Activated CD4-positive, alpha-beta T cell treated with anti-CD3 and anti-CD28 coated beads for 36 hours (primary cell): ENCODE measurements at regions of chr3 and their contacts with region 1.

Region 1: DNA sequence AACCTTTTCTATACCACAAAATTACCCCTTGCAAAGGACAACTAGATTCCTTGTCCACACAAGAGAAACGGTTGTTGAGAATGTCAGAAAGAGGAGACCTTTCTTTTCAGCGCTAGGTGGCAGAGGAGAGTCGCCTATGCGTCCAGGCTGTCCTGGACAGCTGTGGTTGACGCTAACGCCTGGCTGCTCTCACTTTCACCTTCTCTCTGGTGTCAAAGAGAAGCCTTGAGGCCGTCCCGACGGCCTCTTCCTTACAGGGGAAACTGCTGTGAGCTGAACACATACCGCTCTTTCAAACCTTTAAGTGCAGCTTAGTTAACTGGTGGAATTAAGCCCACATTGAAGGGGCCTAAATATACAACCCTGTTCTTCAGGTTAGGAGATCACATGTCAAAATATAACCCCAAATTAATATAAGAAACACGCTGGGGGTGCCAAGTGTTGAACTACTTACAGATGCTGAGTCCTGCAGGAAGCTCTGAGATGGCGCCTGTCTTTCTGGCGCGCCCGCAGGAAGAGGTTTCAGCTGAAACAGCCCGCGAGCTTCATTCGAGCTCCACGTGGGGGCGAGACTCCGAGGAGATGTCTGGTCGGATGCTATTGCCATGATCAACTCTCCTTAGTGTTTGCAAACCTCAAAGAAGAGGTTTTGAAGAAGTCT is 26.1 kb upstream of the KBTBD8 start:
- DNase-seq: peak; percentile 80
- ATAC-seq: peak; percentile 96
- H3K4me3 Mint-ChIP-seq: peak overlapping the region; percentile 69
- H3K27ac Mint-ChIP-seq: peak overlapping the region; percentile 73
- H3K4me1 Mint-ChIP-seq: peaks cover 13% of the 10 kb centered on the region
- H3K27me3 Mint-ChIP-seq: peaks cover 2% of the 10 kb centered on the region

Region 2: DNA sequence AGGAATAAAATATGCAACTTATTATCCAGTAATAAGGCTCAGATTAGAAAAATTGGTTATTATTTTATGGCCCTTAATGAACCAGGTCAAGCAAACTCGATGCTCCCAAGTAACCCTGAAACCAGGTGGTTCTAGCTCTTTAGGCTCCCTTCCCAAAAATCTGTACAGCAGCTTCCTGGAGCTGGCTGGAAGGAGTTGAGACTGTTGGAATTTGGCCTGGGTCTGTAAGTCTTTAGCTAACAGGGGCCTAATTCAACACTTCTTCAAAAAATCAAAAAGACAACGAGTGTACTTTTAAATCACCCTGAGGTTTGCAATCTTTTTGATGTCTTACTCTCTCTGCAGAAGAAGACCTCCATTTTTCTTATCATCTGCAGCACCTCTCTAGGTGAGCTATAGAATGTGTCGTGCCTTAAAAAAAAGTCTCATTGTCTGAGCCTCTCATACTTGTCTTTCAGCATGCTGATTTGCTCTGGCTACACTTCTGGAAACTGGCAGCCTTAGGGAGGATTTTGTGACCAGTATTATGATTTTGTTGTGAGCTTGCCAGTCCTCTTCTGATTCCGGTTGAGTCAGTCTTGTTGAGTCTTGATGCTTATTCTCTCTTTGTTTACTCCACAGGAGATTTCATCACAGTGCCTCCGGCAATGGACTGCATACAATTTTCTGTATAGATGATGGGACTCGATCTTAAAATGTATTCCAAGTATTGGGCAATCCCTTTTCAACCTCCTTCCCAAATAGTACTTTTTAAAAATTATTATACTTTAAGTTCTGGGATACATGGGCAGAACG is 208.9 kb before region 1 on chr3:
- CTCF ChIA-PET with region 1: no interaction called
- POLR2A ChIA-PET with region 1: no interaction called
- intact Hi-C with region 1: no loop called
- DNase-seq: no peak
- ATAC-seq: no peak
- H3K4me3 Mint-ChIP-seq: no peak overlapping the region
- H3K27ac Mint-ChIP-seq: no peak overlapping the region
- H3K4me1 Mint-ChIP-seq: no peaks in the 10 kb centered on the region
- H3K27me3 Mint-ChIP-seq: no peaks in the 10 kb centered on the region

Region 3: DNA sequence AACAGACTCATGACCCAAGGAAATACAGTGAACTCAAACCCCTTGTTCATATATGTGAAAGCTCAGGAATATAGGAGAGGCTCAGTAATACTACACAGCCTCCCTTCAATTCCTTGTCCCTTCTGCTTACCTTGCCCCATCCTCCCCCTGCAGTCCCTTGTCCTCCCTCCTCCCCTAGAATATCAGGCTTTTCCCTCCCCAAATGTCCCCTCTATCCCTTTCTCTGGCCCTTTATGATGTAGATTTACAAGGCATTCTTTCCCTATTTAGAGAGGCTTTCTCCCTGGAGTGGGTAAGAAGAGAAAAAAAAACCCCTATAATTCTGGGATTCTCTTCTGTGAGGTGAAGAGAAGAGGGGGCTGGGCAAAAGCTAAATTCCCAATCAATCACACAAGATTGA is 38.8 kb before region 1 on chr3:
- CTCF ChIA-PET with region 1: interaction called, 30 read pairs
- POLR2A ChIA-PET with region 1: no interaction called
- intact Hi-C with region 1: no loop called
- DNase-seq: no peak
- ATAC-seq: no peak
- H3K4me3 Mint-ChIP-seq: no peak overlapping the region
- H3K27ac Mint-ChIP-seq: no peak overlapping the region
- H3K4me1 Mint-ChIP-seq: no peaks in the 10 kb centered on the region
- H3K27me3 Mint-ChIP-seq: peaks cover 13% of the 10 kb centered on the region

Region 4: DNA sequence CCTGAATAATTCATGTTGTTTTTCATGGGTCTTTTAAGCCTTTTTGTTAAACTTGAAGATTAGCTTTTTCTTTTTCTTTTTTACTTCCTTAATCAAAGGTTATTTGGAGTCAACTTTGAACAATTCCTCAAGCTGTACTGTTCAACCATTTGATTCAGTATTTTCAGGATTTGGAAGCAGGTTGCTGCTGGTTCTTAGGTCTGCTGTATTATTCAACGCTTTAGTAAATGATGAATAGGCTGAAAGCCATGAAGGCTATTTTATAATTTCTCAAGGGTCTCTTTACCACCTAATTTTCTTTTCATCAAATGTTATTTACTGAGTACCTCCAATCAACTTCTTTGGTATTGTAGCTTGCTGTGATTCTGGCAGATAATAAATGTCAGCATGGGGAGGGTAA is 19.7 kb before region 1 on chr3:
- CTCF ChIA-PET with region 1: interaction called, 13 read pairs
- POLR2A ChIA-PET with region 1: no interaction called
- intact Hi-C with region 1: no loop called
- DNase-seq: no peak
- ATAC-seq: no peak
- H3K4me3 Mint-ChIP-seq: no peak overlapping the region
- H3K27ac Mint-ChIP-seq: no peak overlapping the region
- H3K4me1 Mint-ChIP-seq: no peaks in the 10 kb centered on the region
- H3K27me3 Mint-ChIP-seq: peaks cover 4% of the 10 kb centered on the region

Region 5: DNA sequence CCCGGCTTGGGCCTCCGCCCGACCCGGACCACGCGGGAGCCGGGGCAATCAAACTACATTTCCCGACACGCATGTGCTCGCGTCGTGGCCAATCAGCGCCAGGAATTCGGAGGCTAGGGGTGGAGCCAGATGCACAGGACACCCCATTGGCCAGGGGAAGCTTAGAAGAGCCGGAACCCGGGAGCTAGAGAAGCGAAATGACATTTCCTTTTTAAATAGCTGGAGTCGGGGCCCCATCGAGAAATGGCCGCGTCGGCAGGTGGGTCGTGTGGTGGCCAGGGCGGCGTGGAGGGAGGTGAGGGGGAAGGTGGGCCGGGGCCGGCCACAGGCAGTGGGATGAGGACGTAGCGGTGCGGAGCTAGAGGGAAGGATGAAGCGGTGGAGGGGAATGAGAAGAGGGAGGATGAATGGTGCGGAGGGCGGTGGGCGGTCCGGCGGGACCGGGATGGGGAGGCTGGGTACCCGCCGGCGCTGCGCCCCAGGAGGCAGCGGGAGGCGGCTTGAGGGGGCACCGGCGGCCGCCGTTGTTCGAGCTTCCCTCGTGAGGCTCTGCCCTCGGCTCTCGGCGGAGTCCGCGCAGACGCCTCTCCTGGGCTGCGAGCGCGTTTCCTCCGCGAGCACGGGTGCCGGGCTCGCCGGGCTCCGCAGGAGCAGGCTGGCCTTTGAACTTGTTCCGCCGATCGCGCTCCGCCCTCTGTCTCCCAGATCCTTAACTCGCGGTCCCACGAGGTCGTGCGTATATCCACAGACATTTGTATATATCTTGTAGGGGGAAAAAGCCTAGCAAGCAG is 26.3 kb after region 1 on chr3 and contains the start of gene KBTBD8:
- CTCF ChIA-PET with region 1: interaction called, 26 read pairs
- POLR2A ChIA-PET with region 1: interaction called, 7 read pairs
- intact Hi-C with region 1: loop called in 1 of 2 experiments (anchors 2 kb)
- DNase-seq: peak; percentile 98
- ATAC-seq: peak; percentile 95
- H3K4me3 Mint-ChIP-seq: peak within 1 kb of the TSS; percentile 88
- H3K27ac Mint-ChIP-seq: peak within 1 kb of the TSS; percentile 92
- H3K4me1 Mint-ChIP-seq: peaks cover 30% of the 10 kb centered on the region
- H3K27me3 Mint-ChIP-seq: peaks cover 7% of the 10 kb centered on the region
- total RNA-seq, gene KBTBD8: 8.3 to 9.2 TPM

Region 6: GRCh38 chr3:67030785-67031740 is 59.0 kb after region 1 on chr3:
- CTCF ChIA-PET with region 1: interaction called, 7 read pairs
- POLR2A ChIA-PET with region 1: no interaction called
- intact Hi-C with region 1: loop called (anchors 5 kb)
- DNase-seq: no peak
- ATAC-seq: no peak
- H3K4me3 Mint-ChIP-seq: no peak overlapping the region
- H3K27ac Mint-ChIP-seq: no peak overlapping the region
- H3K4me1 Mint-ChIP-seq: peaks cover 3% of the 10 kb centered on the region
- H3K27me3 Mint-ChIP-seq: no peaks in the 10 kb centered on the region

Region 7: DNA sequence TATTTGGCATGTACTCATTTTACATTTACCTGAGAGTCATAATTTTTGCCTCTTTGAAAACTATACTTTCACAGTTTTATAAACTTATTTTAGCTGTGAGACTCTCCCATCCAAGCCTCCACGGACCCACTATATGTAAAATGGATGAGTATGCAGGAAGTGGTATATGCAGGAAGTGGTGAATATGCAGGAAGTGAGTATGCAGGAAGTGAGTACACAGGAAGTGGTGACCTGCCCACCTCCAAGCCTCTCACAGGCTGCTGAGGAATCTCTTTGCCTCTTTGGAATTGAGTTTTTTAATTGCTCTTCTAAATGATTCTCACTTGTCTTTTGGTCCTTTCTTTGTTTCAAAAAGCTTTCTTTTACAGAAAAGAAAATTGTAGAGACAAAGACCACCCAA is 111.3 kb after region 1 on chr3:
- CTCF ChIA-PET with region 1: no interaction called
- POLR2A ChIA-PET with region 1: no interaction called
- intact Hi-C with region 1: loop called in 1 of 2 experiments (anchors 5 kb)
- DNase-seq: peak; percentile 68
- ATAC-seq: peak; percentile 99
- H3K4me3 Mint-ChIP-seq: peak overlapping the region; percentile 45
- H3K27ac Mint-ChIP-seq: peak overlapping the region; percentile 94
- H3K4me1 Mint-ChIP-seq: peaks cover 22% of the 10 kb centered on the region
- H3K27me3 Mint-ChIP-seq: no peaks in the 10 kb centered on the region

Region 8: GRCh38 chr3:68876112-68876713 is 1904.2 kb after region 1 on chr3:
- CTCF ChIA-PET with region 1: interaction called, 8 read pairs
- POLR2A ChIA-PET with region 1: no interaction called
- intact Hi-C with region 1: loop called in 1 of 2 experiments (anchors 10 kb)
- DNase-seq: peak; percentile 38
- ATAC-seq: peak; percentile 49
- H3K4me3 Mint-ChIP-seq: no peak overlapping the region
- H3K27ac Mint-ChIP-seq: no peak overlapping the region
- H3K4me1 Mint-ChIP-seq: no peaks in the 10 kb centered on the region
- H3K27me3 Mint-ChIP-seq: peaks cover 8% of the 10 kb centered on the region